GM12878 (cell line): ENCODE measurements at regions of chr7 and their contacts with region 1.

Region 1: DNA sequence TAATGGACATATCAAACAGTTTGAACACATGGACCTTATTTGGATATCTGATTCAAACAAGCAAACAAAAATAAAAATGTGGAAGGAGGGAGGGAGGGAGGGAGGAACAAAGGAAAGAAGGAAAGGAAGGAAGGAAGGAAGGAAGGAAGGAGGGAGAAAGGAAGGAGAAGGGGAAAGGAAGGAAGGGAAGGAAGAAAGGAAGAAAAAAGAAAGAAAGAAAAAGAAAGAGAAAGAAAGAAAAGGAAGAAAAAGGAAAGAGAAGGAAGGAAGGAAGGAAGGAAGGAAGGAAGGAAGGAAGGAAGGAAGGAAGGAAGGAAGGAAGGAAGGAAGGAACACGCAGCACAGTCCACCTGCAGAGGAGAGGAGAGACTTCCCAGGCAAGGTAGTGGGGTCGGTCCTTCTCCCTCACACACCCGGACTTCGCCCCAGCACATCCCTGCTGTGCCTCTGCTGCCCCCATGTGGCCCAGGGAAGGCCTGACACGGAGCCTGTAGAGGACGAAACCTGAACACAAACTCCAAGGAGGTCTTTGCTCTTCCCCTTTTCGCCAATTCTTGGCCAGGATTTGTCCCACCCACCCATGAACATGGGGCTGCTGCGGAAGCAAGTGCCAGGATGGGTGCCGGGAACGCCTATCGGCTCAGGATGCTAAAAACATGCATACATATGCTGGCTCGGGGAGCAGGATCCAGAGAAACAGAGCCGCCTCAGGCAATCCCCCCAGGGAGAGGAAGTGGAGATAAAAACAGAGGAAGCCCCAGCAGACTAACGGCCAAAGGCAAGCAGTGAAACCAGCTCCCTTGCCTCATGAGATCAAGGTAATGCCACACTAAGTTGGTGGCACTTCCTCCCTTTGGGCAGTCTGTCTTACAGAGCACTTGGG is 52.3 kb upstream of the DGKI start:
- DNase-seq: peak; percentile 48
- ATAC-seq: peak; percentile 79
- H3K4me3 ChIP-seq: 0 out of 2 replicates have a peak overlapping the region, but pooled peaks have one; percentile 1
- H3K27ac ChIP-seq: peak overlapping the region; percentile 75
- H3K4me1 ChIP-seq: peaks cover 33% of the 10 kb centered on the region
- H3K27me3 ChIP-seq: no peaks in the 10 kb centered on the region
- CTCF ChIP-seq: peak; percentile 88 to 98 (median 98)
- EP300 ChIP-seq: no peak
- POLR2A ChIP-seq: no peak
- RAD21 ChIP-seq: peak; percentile 99

Region 2: DNA sequence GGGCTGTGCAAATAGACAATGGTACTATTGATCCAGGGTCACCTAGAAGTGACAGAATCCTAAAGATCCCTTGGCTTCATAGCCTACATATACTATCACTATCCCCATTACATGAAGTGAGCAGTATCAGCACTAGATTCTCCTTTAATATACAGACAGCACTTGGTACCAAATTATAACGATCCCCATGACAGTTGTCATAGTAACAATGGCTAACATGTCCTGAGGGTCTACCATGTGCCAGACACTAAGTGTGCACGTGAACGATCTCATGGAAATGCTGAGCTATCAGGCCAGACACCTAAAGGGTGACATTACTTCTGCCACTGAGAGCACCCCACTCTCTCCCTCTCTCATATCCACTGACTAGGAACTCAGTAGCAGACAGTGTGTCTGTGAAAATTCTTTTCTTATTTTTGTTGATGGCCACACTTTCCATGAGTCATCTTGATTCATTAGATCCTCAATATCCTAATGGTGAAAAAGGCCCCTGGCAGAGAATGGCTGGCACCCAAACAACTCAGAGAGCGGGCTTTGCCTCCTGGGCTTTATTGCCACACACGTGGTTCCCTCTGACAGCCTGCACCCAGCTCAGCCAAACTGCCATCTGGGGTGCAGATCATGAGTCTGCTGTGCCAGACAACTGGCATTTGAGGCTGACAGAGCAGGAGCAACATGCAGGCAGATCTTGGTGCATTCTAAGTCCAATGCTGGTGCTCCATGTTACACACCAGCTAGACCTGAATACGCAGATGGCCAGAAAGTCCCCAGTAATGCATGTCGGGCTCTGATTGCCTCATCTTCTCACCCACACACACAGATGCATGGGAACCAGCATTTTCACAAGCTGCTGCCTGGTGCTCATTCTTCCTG is 228.6 kb before region 1 on chr7:
- CTCF ChIA-PET with region 1: interaction called, 11 read pairs
- POLR2A ChIA-PET with region 1: interaction called, 4 read pairs
- RAD21 ChIA-PET with region 1: interaction called, 34 read pairs
- SMC1A ChIA-PET with region 1: interaction called, 35 read pairs
- in situ Hi-C with region 1: no loop called
- intact Hi-C with region 1: no loop called
- DNase-seq: peak; percentile 35
- ATAC-seq: peak; percentile 77
- H3K4me3 ChIP-seq: no peak overlapping the region
- H3K27ac ChIP-seq: no peak overlapping the region
- H3K4me1 ChIP-seq: 0 out of 2 replicates have a peak, but pooled peaks cover 2% of the 10 kb centered on the region
- H3K27me3 ChIP-seq: no peaks in the 10 kb centered on the region
- CTCF ChIP-seq: no peak
- EP300 ChIP-seq: no peak
- POLR2A ChIP-seq: no peak
- RAD21 ChIP-seq: peak; percentile 19; the same call in 1 of the 2 replicates

Region 3: DNA sequence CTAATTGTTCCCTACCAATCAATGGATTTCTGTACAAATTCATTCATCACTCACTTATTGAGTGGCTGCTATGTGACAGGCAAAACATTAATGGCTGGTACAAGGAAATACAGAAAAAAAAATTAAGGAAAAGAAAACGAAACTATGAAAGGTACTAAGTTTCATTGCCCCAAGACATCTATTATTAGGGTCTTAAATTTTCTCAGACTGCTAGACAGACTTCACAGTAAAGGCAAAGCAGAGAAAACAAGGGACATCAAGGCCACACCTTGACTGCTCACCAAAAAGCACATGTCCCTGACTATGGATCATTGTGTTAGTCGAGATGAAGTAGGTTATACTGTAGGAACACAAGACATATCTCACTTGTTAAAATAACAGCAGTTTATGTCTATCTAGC is 88.8 kb before region 1 on chr7:
- CTCF ChIA-PET with region 1: interaction called, 10 read pairs
- POLR2A ChIA-PET with region 1: no interaction called
- RAD21 ChIA-PET with region 1: interaction called, 5 read pairs
- SMC1A ChIA-PET with region 1: interaction called, 11 read pairs
- in situ Hi-C with region 1: no loop called
- intact Hi-C with region 1: no loop called
- DNase-seq: no peak
- ATAC-seq: peak; percentile 31
- H3K4me3 ChIP-seq: no peak overlapping the region
- H3K27ac ChIP-seq: no peak overlapping the region
- H3K4me1 ChIP-seq: peaks cover 3% of the 10 kb centered on the region; the same call in 1 of the 2 replicates
- H3K27me3 ChIP-seq: no peaks in the 10 kb centered on the region
- CTCF ChIP-seq: no peak
- EP300 ChIP-seq: no peak
- POLR2A ChIP-seq: no peak
- RAD21 ChIP-seq: no peak

Region 4: DNA sequence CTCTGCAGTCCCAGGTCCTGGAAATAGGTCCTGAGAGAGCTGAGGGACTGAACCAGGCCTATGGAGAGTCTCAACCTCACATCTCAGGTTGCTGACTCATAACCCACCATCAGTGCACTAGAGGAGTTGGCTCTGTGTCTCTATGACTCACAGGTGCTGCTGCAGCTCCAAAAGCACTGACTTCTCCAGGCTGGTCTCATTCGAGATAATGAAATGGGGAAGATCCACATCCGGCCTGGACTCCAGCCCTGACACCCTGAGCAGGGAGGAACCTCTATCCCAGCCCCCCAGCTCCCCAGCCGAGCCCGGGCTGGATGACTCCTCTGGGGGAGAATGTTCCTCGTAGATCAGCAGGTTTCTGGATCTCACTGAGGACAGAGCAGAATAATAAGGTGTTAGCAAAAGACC is 16.8 kb before region 1 on chr7:
- CTCF ChIA-PET with region 1: interaction called, 5 read pairs
- POLR2A ChIA-PET with region 1: no interaction called
- RAD21 ChIA-PET with region 1: interaction called, 12 read pairs
- SMC1A ChIA-PET with region 1: interaction called, 13 read pairs
- in situ Hi-C with region 1: no loop called
- intact Hi-C with region 1: no loop called
- DNase-seq: peak; percentile 43
- ATAC-seq: peak; percentile 94
- H3K4me3 ChIP-seq: no peak overlapping the region
- H3K27ac ChIP-seq: peak overlapping the region; percentile 17; the same call in 1 of the 2 replicates
- H3K4me1 ChIP-seq: peaks cover 5% of the 10 kb centered on the region
- H3K27me3 ChIP-seq: no peaks in the 10 kb centered on the region
- CTCF ChIP-seq: no peak
- EP300 ChIP-seq: no peak
- POLR2A ChIP-seq: no peak
- RAD21 ChIP-seq: no peak

Region 5: GRCh38 chr7:138008547-138009349 is 109.7 kb after region 1 on chr7:
- CTCF ChIA-PET with region 1: interaction called, 704 read pairs
- POLR2A ChIA-PET with region 1: no interaction called
- RAD21 ChIA-PET with region 1: interaction called, 340 read pairs
- SMC1A ChIA-PET with region 1: interaction called, 436 read pairs
- in situ Hi-C with region 1: no loop called
- intact Hi-C with region 1: loop called (anchors 1 kb)
- DNase-seq: no peak
- ATAC-seq: peak; percentile 86
- H3K4me3 ChIP-seq: no peak overlapping the region
- H3K27ac ChIP-seq: no peak overlapping the region
- H3K4me1 ChIP-seq: no peaks in the 10 kb centered on the region
- H3K27me3 ChIP-seq: no peaks in the 10 kb centered on the region
- CTCF ChIP-seq: peak; percentile 80 to 84 (median 80)
- EP300 ChIP-seq: no peak; a peak in 1 of 4 replicates
- POLR2A ChIP-seq: no peak
- RAD21 ChIP-seq: peak; percentile 100

Region 6: GRCh38 chr7:138738551-138739335 is 839.7 kb after region 1 on chr7:
- CTCF ChIA-PET with region 1: interaction called, 7 read pairs
- POLR2A ChIA-PET with region 1: no interaction called
- RAD21 ChIA-PET with region 1: interaction called, 13 read pairs
- SMC1A ChIA-PET with region 1: interaction called, 8 read pairs
- in situ Hi-C with region 1: loop called (anchors 5 kb)
- intact Hi-C with region 1: loop called (anchors 2 kb)
- DNase-seq: peak; percentile 64
- ATAC-seq: peak; percentile 99
- H3K4me3 ChIP-seq: no peak overlapping the region
- H3K27ac ChIP-seq: no peak overlapping the region
- H3K4me1 ChIP-seq: no peaks in the 10 kb centered on the region
- H3K27me3 ChIP-seq: no peaks in the 10 kb centered on the region
- CTCF ChIP-seq: peak; percentile 87 to 98 (median 94); a peak in 5 of 6 replicates
- EP300 ChIP-seq: no peak
- POLR2A ChIP-seq: no peak
- RAD21 ChIP-seq: peak; percentile 98